ENCODE measurements at regions of chr1 and their contacts with region 1.

Region 1: GRCh38 chr1:204806943-204807687 is 63.5 kb upstream of the NFASC start:
- DNase-seq: no peak
- H3K4me3 ChIP-seq: peak overlapping the region; percentile 59
- CTCF ChIP-seq: peak; percentile 99

Region 2: GRCh38 chr1:204431310-204432165 is 375.6 kb before region 1 on chr1:
- CTCF ChIA-PET with region 1: interaction called, 33 read pairs
- POLR2A ChIA-PET with region 1: no interaction called
- DNase-seq: peak; percentile 46
- H3K4me3 ChIP-seq: no peak overlapping the region
- CTCF ChIP-seq: peak; percentile 85

Region 3: DNA sequence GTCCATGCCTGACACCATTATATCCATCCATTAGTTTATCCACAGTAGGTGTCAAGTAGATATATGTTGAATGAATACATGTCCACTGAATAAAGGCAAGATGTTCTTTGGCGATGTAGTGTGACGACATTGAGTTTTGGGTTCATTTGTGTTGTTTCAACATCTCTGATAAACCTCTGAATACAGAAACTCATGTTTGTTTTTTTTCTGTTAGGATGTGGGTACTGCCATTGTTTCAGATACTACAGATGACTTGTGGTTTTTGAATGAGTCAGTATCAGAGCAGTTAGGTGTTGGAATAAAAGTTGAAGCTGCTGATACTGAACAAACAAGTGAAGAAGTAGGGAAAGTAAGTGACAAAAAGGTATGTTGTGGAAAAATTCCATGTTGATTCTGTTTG is 262.8 kb before region 1 on chr1:
- CTCF ChIA-PET with region 1: interaction called, 41 read pairs
- POLR2A ChIA-PET with region 1: no interaction called
- DNase-seq: no peak
- H3K4me3 ChIP-seq: no peak overlapping the region
- CTCF ChIP-seq: no peak

Region 4: DNA sequence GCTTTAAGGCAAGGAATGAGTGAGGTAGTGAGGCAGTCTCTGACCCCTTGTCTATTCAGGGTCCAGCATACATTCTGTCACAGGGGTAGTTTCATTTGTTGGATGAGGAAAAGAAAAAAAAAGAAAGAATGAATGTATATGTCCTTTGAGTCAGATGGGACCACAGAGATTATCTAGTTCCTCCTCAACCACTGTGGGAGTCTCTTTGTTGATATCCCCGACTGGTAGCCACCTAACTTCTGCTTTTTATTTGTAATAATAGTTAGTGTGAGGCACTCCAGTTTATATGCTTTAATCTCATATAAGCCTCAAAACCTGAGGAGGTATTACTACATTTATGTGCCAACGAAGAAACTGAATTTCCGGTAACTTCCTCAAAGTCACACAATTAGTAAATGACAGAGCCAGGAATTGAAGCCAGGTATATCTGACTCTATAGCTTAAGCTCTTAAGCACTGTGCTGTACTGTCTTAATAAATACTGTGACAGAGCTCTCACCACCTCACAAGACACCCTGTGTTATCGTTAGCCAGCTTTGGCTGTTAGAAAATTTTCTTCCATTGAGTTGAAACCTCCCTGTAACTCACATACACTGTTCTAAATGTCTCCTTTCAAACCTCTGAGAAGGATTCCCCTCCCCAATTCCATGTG is 208.7 kb before region 1 on chr1:
- CTCF ChIA-PET with region 1: interaction called, 11 read pairs
- POLR2A ChIA-PET with region 1: no interaction called
- DNase-seq: no peak
- H3K4me3 ChIP-seq: no peak overlapping the region
- CTCF ChIP-seq: no peak

Region 5: DNA sequence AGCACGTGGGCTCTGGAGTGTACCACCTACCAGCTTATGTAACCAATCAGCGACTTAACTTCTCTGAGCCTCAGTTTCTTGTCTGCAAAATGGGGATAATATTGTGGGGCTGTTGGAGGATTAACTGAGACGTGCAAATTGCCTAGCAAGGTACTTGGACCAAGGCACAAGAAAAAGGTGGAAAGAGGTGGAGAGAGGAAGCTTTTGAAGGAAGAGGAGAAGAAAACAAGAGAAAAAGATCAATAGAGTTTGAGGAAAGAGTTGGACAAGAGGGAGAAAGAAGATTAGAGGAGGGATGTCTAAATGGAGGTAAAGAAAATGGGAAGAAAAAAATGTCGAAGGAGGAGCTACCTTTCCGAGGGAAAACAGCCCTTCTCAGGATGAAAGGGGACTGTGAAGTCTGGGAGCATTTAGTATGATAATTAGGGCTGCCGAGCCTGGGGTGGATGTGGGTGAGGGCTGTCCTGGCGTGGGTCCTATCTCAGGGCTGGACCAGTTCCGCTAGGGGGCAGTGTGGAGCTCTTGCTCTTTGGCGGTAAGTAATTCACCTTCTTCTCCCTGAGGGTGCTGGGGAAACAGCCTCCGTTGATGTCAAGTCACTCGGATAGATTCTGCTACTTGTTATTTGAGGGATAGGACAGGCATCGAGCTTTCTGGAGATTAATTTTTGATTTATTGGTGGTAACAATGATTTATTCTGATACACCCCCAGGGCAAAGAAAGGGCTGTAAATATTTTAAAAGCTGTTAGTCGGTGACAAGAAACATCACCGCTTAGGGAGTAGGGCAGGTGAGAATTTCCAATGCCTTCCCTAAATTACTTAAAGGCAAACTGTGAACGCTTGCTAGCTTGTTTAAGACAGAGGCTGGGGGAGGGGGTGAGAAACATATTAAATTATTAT is 15.4 kb before region 1 on chr1:
- CTCF ChIA-PET with region 1: interaction called, 231 read pairs
- POLR2A ChIA-PET with region 1: no interaction called
- DNase-seq: no peak
- H3K4me3 ChIP-seq: no peak overlapping the region
- CTCF ChIP-seq: peak; percentile 68

Region 6: GRCh38 chr1:204909109-204909508 is 102.0 kb after region 1 on chr1:
- CTCF ChIA-PET with region 1: interaction called, 13 read pairs
- POLR2A ChIA-PET with region 1: no interaction called
- DNase-seq: no peak
- H3K4me3 ChIP-seq: no peak overlapping the region
- CTCF ChIP-seq: no peak

Region 7: DNA sequence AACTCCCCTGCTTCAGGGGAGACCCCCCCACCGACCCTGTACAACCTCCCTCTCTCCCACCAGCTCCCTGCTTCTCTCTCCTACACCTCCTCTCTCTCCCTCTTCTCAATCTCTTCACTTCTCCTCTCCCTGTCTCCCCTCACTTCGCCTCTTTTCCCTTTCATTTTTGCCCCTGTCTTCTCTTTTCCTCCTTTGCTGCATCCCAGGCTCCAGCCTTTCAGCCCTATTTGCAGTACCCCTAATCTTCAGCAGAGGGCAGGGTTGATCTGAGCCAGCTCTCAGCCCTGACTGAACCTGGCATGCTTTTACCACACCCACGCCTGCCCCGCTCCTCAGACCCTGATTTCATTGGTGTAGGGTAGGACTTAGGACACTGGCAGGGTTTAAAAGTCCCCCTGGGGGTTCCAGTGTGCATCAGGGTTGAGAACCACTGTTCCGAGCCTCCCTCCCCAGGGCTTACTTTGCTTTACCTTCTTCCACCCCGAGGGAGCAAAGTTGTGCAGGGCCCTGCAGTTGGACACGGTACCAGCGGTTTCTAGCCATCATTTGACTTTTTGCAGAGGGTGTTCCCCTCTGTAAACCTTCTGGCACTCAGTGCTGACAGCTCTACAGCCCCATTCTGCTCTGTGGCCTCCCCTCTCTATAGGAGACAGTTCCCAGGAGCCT is 168.6 kb after region 1 on chr1:
- CTCF ChIA-PET with region 1: interaction called, 22 read pairs
- POLR2A ChIA-PET with region 1: interaction called, 3 read pairs
- DNase-seq: no peak
- H3K4me3 ChIP-seq: no peak overlapping the region
- CTCF ChIP-seq: peak; percentile 79

Region 8: DNA sequence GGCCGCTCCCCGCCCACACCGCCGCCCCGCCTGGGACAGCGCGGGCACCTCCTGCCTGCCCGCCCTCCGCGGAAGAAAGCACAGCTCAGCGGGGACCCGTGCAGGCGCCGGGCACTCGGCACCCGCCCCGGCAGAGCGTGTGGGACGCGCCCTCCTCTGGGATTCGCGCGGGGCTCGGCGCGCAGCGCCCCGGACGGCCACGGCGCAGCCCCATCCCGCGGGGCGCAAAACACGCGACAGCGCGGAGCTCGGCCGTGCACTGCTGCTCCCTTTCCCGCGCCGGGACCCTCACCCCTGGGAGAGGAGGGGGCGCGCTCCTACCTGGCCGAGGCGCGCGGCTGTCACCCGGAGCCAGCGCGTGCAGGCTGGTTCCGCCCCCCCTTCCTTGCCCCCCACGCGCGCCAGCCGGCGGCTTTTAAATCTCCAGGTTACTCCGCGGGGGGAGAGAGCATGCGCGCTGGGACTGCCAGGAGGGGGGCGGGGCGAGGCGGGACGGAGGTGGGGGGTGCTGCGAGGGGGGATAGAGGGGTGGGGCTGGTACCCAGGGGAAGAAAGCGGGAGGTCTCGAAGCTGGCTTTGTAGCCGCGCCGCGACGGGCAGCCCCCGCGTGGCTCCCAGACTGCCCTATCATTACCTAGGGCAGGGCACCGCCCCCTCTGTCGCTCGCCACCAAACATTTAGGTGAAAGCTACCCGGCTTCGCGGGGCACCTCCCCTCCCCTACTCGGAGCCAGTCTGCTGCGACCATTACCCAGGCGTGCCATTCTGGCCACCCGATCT is 873.1 kb after region 1 on chr1 and contains the start of gene SLC45A3:
- CTCF ChIA-PET with region 1: no interaction called
- POLR2A ChIA-PET with region 1: no interaction called
- DNase-seq: no peak
- H3K4me3 ChIP-seq: peak within 1 kb of the TSS; percentile 66
- CTCF ChIP-seq: no peak

Region 9: DNA sequence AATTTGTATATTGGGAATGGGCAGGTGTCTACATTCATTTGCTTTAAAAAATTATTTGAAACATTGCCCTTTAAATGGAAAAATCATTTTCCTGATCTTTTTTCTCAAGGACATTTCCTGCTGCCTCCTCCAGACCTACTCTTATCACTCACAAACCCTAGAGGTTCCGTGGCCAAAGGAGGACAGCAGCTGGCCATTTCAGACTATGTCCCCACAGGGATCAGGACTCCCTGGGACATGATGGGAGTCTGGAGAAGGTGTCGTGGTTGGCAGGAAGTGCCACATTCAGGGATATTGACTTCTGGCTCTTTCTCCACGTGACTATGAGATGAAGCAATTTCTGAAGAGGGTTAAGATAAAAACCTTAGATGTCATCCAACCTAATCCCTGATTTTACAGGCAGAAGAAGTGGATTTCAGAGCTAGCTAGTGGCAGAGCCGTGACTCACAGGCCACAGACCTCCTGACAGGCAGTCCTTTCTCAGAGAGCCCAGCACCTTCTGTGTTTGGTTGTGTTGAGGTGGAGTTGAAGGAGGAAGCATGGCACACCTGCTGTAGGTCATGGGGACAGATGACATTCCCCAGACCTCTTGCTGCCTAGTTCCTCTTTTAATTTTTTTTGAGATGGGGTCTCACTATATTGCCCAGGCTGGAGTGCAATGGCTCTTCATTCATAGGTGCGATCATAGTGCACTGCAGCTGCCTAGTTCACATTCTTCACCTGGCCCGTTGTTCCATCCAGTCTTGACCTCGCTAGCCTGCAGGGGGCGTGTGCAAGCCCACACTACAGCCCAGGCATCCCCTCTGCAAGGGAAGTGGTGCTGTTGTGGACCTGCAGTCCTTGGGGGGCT is 1990.6 kb after region 1 on chr1:
- CTCF ChIA-PET with region 1: no interaction called
- POLR2A ChIA-PET with region 1: no interaction called
- DNase-seq: no peak
- H3K4me3 ChIP-seq: no peak overlapping the region
- CTCF ChIP-seq: peak; percentile 50

Measured in AG04449 (cell line).